Endothelial cell of umbilical vein (primary cell): ENCODE measurements at regions of chrX and their contacts with region 1.

Region 1: GRCh38 chrX:104098151-104098808 is 14.0 kb upstream of the ZCCHC18 start:
- DNase-seq: peak; percentile 74
- H3K4me3 ChIP-seq: no peak overlapping the region
- H3K27ac ChIP-seq: no peak overlapping the region
- H3K4me1 ChIP-seq: no peaks in the 10 kb centered on the region
- H3K27me3 ChIP-seq: no peaks in the 10 kb centered on the region
- CTCF ChIP-seq: peak in 1 of 2 donors; percentile 33
- POLR2A ChIP-seq: no peak

Region 2: DNA sequence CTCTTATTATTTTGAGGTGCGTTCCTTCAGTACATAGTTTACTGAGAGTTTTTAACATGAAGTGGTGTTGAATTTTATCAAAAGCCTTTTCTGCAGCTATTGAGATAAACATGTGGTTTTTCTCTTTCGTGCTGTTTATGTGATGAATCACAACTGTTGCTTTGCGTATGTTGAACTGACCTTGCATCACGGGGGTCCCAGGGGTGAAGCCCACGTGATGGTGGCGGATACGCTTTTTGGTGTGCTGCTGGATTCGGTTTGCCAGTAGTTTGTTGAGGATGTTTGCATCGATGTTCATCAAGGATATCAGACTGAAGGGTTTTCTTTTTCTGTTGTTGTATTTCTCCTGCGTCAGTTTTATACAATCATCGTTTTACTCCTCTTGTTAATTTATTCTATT is 80.2 kb before region 1 on chrX:
- CTCF ChIA-PET with region 1: no interaction called
- POLR2A ChIA-PET with region 1: no interaction called
- dilution Hi-C with region 1: no loop called
- intact Hi-C with region 1: no loop called
- DNase-seq: no peak
- H3K4me3 ChIP-seq: no peak overlapping the region
- H3K27ac ChIP-seq: no peak overlapping the region
- H3K4me1 ChIP-seq: no peaks in the 10 kb centered on the region
- H3K27me3 ChIP-seq: no peaks in the 10 kb centered on the region
- CTCF ChIP-seq: no peak
- POLR2A ChIP-seq: no peak

Region 3: DNA sequence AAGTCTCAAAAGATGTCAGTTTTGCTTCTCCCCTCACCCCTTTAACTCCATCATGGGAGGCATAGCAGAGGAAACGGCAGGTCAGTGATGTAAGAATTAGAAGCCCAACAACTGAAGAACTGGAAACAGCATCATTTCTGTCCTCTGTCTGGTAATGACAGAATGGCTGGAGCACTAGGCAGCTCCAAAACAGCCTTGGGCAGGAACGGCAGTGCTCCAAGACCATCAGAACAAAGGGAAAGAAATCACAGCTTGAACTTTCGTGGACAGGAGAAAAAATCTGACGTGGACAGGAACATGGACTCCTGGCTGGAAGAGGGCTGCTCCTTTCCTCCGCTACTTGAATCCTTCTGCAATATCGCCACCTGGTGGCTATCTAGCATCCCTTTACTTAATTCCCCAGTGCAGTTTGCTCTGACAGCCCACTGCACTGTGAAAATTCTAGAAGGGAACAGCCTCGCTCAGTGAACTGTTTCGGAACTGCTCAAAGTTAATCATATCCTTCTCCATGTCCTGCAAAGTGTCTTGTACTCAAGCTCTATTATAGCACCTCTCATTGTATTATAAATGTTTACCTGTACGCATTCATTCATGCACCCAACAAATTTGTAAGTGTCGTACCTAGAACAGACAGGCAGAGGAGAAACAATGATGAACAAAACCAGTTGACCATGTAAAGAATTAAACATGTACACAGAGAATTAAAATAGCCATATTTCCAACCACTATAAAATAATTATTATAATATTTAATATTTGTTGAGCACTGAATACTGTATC is 38.1 kb after region 1 on chrX:
- CTCF ChIA-PET with region 1: interaction called, 19 read pairs
- POLR2A ChIA-PET with region 1: no interaction called
- dilution Hi-C with region 1: no loop called
- intact Hi-C with region 1: loop called (anchors 1 kb)
- DNase-seq: peak; percentile 73
- H3K4me3 ChIP-seq: peak overlapping the region in 2 of 3 experiments; percentile 16 to 19
- H3K27ac ChIP-seq: no peak overlapping the region
- H3K4me1 ChIP-seq: no peaks in the 10 kb centered on the region
- H3K27me3 ChIP-seq: no peaks in the 10 kb centered on the region
- CTCF ChIP-seq: peak; percentile 54 to 55
- POLR2A ChIP-seq: no peak

Region 4: GRCh38 chrX:104151037-104151436 is 52.8 kb after region 1 on chrX:
- CTCF ChIA-PET with region 1: no interaction called
- POLR2A ChIA-PET with region 1: no interaction called
- dilution Hi-C with region 1: no loop called
- intact Hi-C with region 1: no loop called
- DNase-seq: no peak
- H3K4me3 ChIP-seq: no peak overlapping the region
- H3K27ac ChIP-seq: no peak overlapping the region
- H3K4me1 ChIP-seq: peaks cover 2% of the 10 kb centered on the region
- H3K27me3 ChIP-seq: no peaks in the 10 kb centered on the region
- CTCF ChIP-seq: no peak
- POLR2A ChIP-seq: no peak

Region 5: GRCh38 chrX:104270920-104271512 is 172.7 kb after region 1 on chrX:
- CTCF ChIA-PET with region 1: no interaction called
- POLR2A ChIA-PET with region 1: no interaction called
- dilution Hi-C with region 1: no loop called
- intact Hi-C with region 1: loop called (anchors 1 kb)
- DNase-seq: peak; percentile 62
- H3K4me3 ChIP-seq: peak overlapping the region in 1 of 3 experiments; percentile 40
- H3K27ac ChIP-seq: no peak overlapping the region
- H3K4me1 ChIP-seq: peaks cover 2% of the 10 kb centered on the region
- H3K27me3 ChIP-seq: peaks cover 0 to 7% of the 10 kb centered on the region in 2 experiments
- CTCF ChIP-seq: peak; percentile 49 to 55
- POLR2A ChIP-seq: no peak

Region 6: DNA sequence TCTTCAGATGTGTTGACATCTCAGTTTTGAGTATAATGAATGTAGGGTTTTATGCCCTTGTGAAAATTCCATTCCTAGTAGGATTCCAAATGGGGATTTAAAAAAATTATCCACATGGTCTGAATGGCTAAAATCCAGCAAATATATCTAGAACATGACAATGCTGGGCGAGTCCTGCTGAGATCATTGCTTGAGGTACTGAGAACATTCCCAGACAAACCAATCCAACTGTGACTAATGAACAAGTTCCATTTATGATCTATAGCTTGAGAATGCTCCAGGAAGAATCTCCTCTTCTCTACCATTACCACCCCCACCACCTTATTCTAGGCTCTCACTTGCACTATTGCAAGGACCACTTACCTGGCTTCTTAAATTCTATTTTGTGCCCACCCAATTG is 390.5 kb after region 1 on chrX:
- CTCF ChIA-PET with region 1: no interaction called
- POLR2A ChIA-PET with region 1: no interaction called
- dilution Hi-C with region 1: no loop called
- intact Hi-C with region 1: no loop called
- DNase-seq: no peak
- H3K4me3 ChIP-seq: no peak overlapping the region
- H3K27ac ChIP-seq: no peak overlapping the region
- H3K4me1 ChIP-seq: no peaks in the 10 kb centered on the region
- H3K27me3 ChIP-seq: no peaks in the 10 kb centered on the region
- CTCF ChIP-seq: no peak
- POLR2A ChIP-seq: no peak